Upper lobe of right lung (tissue), 1 donor: ENCODE measurements at regions of chr6 and their contacts with region 1.

Region 1: DNA sequence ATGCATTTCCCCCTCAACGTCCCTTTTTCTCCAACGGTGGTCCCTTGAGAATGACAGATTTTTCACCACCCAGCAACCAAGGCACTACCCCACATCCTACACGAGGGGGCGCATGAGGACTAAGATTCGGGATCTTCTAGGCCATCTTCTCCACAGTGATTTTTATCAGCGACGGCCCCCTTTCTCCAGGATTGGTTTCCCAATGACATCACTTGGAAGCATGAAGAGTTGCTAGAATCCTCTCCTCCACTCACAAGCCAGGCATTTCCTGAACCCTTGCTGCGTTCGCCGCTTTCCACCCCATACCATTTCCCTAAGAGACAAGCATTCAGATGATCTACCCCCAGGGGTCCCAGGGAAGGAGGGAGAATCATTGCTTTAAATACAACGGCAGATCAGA is 252.0 kb downstream of the HIVEP2 start:
- DNase-seq: peak; percentile 65
- ATAC-seq: peak; percentile 87
- H3K4me3 ChIP-seq: no peak overlapping the region
- H3K27ac ChIP-seq: no peak overlapping the region
- H3K4me1 ChIP-seq: peaks cover 10% of the 10 kb centered on the region
- H3K27me3 ChIP-seq: no peaks in the 10 kb centered on the region
- CTCF ChIP-seq: peak; percentile 92

Region 2: DNA sequence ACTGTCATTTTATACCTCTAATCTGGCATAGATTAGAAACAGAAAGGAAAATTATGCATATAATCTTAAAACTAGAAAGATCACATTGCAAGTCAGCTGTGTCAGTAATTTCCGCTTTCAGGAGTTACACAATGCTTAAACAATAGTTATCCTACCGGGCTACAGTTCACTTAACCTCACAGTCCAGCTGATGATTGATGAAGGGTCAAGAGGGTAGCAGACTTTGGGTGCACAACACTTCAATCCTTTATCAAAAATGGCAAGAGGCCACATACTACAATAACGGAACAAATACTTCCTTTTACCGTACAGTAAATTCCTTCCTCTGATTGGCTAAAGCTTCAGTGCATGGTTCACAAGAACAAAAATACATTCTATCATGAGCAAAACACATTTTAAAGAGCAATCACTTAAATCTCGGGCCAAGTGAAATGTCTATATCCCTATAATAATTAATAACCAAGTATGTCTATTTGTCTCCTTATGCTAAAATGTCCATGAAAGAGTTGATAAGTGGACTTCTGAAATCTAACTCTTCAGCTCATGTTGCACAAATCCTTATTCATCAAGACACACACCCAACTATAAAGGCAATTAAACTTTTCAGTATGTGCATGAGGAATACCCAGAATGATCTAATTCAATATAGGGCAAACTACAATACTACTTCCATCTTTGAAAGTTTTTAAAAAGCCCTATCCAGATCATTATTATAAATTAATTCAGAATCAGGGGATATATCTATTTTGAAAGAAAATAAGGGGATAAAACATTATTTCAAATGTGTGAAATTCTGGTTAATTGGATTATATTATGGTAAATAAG is 175.3 kb after region 1 on chr6:
- intact Hi-C with region 1: no loop called
- DNase-seq: no peak
- ATAC-seq: peak; percentile 83
- H3K4me3 ChIP-seq: peak overlapping the region; percentile 12
- H3K27ac ChIP-seq: no peak overlapping the region
- H3K4me1 ChIP-seq: peaks cover 36% of the 10 kb centered on the region
- H3K27me3 ChIP-seq: no peaks in the 10 kb centered on the region
- CTCF ChIP-seq: no peak

Region 3: GRCh38 chr6:143026696-143027449 is 333.9 kb after region 1 on chr6:
- intact Hi-C with region 1: loop called (anchors 10 kb)
- DNase-seq: peak; percentile 68
- ATAC-seq: peak; percentile 86
- H3K4me3 ChIP-seq: no peak overlapping the region
- H3K27ac ChIP-seq: no peak overlapping the region
- H3K4me1 ChIP-seq: no peaks in the 10 kb centered on the region
- H3K27me3 ChIP-seq: no peaks in the 10 kb centered on the region
- CTCF ChIP-seq: peak; percentile 71

Region 4: DNA sequence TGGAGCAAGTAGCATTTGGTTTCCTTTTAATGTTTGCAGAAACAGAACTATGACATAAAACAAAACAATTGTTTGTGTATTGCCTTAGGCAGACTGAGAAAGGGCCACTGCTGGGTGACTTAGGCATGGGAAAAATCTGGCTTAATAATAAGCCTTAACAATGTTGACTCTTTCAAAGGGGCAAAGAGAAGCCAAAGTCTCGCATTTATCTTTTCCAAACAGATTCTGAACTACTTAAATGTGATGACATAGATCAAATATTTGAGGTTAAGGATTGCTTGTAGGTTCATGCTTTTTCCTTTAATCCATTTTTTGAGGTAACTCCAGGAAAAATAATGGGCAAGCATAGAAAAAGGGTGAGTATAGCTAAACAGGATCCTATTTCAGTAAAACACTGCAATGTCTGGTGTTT is 717.9 kb after region 1 on chr6:
- intact Hi-C with region 1: loop called (anchors 10 kb)
- DNase-seq: no peak
- ATAC-seq: no peak
- H3K4me3 ChIP-seq: no peak overlapping the region
- H3K27ac ChIP-seq: no peak overlapping the region
- H3K4me1 ChIP-seq: no peaks in the 10 kb centered on the region
- H3K27me3 ChIP-seq: no peaks in the 10 kb centered on the region
- CTCF ChIP-seq: no peak